ENCODE measurements at regions of chr3 and their contacts with region 1.

Region 1: DNA sequence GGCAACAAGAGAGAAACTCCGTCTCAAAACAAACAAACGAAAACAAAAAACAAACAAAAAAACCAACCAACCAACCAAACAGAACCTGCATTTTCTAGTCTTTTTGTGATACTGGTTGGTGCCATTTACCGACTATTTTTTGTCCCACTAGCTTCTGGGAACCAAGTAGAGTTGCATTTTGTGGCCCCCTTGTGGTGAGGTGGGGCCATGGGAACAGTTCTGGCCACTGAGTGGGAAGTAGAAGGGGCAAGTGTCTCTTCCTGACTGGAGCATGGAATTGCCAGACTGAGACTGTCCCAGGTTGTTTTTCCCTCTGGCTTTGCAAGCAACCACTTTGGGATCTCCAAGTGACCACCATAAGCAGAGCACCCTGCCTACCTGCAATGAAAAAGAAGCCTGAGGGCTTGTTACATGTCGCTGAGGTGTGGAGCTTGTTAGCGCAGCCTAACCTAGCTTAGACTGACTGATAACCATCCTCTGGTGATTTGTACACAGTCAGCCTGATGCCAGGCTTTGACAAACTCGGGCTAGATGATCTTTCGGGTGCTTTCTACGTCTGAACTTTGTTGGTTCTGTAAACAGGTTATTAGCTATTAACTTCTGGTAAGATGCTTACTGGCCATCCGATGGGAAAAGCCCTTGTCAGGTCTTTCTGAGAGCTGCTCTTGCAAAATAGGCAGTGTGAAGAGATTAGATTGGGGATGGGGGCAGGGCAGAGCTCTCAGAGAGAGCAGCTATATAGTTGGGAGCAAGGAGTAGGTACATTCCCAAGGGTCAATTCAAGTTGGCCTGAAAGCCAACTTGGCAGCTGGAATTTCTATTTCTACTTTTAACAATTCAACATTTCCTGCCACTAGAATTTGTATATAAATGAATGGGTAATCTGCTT is 172.2 kb downstream of the SSR3 start:
- DNase-seq: peak; percentile 76
- ATAC-seq: peak; percentile 91
- H3K4me3 ChIP-seq: no peak overlapping the region
- H3K27ac ChIP-seq: no peak overlapping the region
- H3K4me1 ChIP-seq: no peaks in the 10 kb centered on the region
- H3K27me3 ChIP-seq: peaks cover 84% of the 10 kb centered on the region
- CTCF ChIP-seq: peak; percentile 88

Region 2: DNA sequence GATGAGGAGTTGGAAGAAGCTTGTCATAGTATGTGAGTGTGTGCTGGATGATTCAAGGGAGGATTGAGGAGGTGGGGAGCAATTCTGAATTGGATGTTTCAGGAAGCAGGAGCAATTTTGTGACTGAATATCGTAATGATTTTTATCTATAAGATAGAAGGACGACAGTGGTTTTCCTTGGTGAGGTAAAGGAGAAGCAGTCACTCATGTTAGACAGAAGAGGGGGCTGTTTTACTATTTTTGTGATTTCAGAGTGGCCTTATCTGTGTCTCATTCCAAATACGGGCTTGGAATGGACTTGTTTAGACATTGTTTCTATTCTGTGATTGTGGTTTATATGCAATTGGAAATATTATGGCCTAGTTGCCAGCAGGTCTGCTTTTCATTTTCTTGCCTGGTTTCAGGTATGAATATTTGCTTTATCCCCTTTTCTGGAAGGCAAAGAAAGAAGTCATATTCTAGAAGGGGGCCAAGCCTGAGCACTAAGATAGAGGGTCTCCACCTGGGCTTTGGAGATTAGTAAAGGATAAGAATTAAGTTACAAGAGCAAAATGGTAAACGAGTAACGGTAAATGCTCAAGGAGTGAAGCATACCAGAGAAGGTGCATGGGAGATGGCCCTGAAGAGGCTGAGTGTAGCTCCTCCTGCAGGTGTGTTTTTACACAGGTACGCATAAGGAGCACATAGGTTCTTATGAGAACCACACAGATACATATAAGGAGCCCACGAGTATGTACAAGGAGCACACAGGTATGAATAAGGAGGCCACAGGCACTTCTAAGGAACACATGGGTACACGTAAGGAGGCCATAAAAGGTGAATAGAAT is 387.0 kb before region 1 on chr3:
- CTCF ChIA-PET with region 1: no interaction called
- POLR2A ChIA-PET with region 1: no interaction called
- intact Hi-C with region 1: loop called (anchors 5 kb)
- DNase-seq: peak; percentile 67
- ATAC-seq: peak; percentile 97
- H3K4me3 ChIP-seq: no peak overlapping the region
- H3K27ac ChIP-seq: no peak overlapping the region
- H3K4me1 ChIP-seq: no peaks in the 10 kb centered on the region
- H3K27me3 ChIP-seq: no peaks in the 10 kb centered on the region
- CTCF ChIP-seq: peak; percentile 70

Region 3: DNA sequence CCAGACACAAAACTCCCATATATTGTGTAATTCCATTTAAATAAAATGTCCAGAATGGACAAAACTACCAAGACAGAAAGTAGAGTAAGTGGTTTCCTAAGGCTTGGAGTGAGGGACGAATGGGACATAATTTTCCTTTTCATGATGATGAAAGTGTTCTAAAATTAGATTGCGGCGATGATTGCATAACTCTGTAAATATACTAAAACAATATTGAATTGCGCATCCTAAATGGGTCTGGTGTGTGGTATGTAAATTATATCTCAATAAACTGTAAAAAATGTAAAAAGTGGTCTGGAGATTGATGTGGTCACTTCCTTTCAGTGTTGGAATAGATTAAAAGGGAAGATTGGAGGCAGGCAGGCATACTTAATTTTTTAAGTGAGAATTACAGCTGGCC is 368.2 kb before region 1 on chr3:
- CTCF ChIA-PET with region 1: no interaction called
- POLR2A ChIA-PET with region 1: no interaction called
- intact Hi-C with region 1: loop called (anchors 2 kb)
- DNase-seq: no peak
- ATAC-seq: no peak
- H3K4me3 ChIP-seq: no peak overlapping the region
- H3K27ac ChIP-seq: no peak overlapping the region
- H3K4me1 ChIP-seq: no peaks in the 10 kb centered on the region
- H3K27me3 ChIP-seq: peaks cover 16% of the 10 kb centered on the region
- CTCF ChIP-seq: no peak

Region 4: GRCh38 chr3:156151824-156152428 is 230.8 kb before region 1 on chr3:
- CTCF ChIA-PET with region 1: interaction called, 28 read pairs
- POLR2A ChIA-PET with region 1: no interaction called
- intact Hi-C with region 1: loop called (anchors 1 kb)
- DNase-seq: peak; percentile 80
- ATAC-seq: peak; percentile 80
- H3K4me3 ChIP-seq: no peak overlapping the region
- H3K27ac ChIP-seq: no peak overlapping the region
- H3K4me1 ChIP-seq: no peaks in the 10 kb centered on the region
- H3K27me3 ChIP-seq: no peaks in the 10 kb centered on the region
- CTCF ChIP-seq: peak; percentile 88

Region 5: GRCh38 chr3:156174229-156174847 is 208.4 kb before region 1 on chr3:
- CTCF ChIA-PET with region 1: interaction called, 15 read pairs
- POLR2A ChIA-PET with region 1: no interaction called
- intact Hi-C with region 1: loop called (anchors 1 kb)
- DNase-seq: peak; percentile 65
- ATAC-seq: peak; percentile 85
- H3K4me3 ChIP-seq: no peak overlapping the region
- H3K27ac ChIP-seq: no peak overlapping the region
- H3K4me1 ChIP-seq: no peaks in the 10 kb centered on the region
- H3K27me3 ChIP-seq: no peaks in the 10 kb centered on the region
- CTCF ChIP-seq: peak; percentile 60

Region 6: DNA sequence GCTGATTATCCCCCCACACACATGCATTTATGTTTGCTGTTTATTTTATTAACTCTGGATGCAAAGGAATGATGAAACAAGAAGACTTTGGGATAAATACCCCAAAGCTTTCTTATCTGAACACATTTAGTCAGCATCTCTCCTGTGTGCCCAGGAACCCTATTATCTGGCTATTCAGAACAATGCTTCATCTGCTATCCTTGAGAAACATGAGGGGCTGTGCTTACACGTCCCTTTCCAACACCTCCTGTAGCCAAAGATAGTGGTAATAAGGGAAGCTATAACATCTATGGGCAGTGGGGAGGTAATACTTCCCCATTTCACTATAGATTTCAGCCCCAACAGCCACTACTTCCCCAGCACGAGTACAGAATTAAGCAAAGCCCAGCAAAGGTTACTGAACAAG is 77.5 kb after region 1 on chr3:
- CTCF ChIA-PET with region 1: no interaction called
- POLR2A ChIA-PET with region 1: no interaction called
- intact Hi-C with region 1: no loop called
- DNase-seq: no peak
- ATAC-seq: no peak
- H3K4me3 ChIP-seq: no peak overlapping the region
- H3K27ac ChIP-seq: no peak overlapping the region
- H3K4me1 ChIP-seq: peaks cover 5% of the 10 kb centered on the region; the same call in 1 of the 2 replicates
- H3K27me3 ChIP-seq: peaks cover 42% of the 10 kb centered on the region
- CTCF ChIP-seq: no peak

Measured in PC-3 (cell line).